Dendritic cell treated with granulocyte-macrophage colony-stimulating factor and Interleukin-4, amounts not matched to agents 40 ng/mL and 50 ng/mL, for 4 days (primary cell): ENCODE measurements at regions of chr14 and their contacts with region 1.

Region 1: DNA sequence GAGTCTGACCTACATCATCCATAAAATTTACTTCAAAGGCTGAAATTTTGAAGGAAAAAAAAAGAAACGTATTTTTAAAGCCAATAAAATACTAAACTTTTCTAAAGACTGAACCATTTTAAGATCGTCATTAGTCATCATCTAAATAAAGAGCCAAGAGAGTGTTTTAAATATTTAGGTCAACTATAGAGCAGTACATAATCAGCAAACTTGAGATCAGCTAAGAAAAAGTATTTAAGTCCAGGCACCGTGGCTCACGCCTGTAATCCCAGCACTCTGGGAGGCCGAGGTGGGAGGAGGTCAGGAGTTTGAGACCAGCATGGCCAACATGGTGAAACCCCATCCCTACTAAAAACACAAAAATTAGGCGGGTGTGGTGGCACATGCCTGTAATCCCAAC is 35.5 kb downstream of the HECTD1 start:
- H3K4me3 Mint-ChIP-seq: no peak overlapping the region
- H3K27ac Mint-ChIP-seq: no peak overlapping the region
- H3K4me1 Mint-ChIP-seq: no peaks in the 10 kb centered on the region
- H3K27me3 Mint-ChIP-seq: no peaks in the 10 kb centered on the region

Region 2: GRCh38 chr14:30943694-30944093 is 228.4 kb before region 1 on chr14:
- intact Hi-C with region 1: loop called (anchors 10 kb)
- H3K4me3 Mint-ChIP-seq: no peak overlapping the region
- H3K27ac Mint-ChIP-seq: no peak overlapping the region
- H3K4me1 Mint-ChIP-seq: no peaks in the 10 kb centered on the region
- H3K27me3 Mint-ChIP-seq: no peaks in the 10 kb centered on the region

Region 3: DNA sequence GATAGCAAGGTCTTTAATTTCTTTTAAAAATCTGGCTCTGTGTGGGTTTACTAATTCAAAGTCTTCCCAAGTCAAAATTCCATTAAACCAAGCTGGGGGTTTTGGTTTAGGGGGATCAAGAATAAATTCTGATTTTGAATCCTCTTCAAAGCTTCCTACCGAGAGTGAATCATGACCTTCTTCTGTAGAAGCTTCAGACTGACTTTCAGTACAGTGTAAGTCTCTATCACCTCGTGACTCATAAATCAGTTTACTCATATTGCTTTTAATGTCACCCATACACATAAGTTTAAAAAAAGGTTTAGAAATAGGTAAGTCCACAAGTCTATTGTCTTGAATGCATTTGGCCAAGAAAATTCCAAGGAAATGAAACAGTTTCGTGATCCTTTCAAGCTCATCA is 65.3 kb before region 1 on chr14:
- intact Hi-C with region 1: loop called (anchors 5 kb)
- H3K4me3 Mint-ChIP-seq: no peak overlapping the region
- H3K27ac Mint-ChIP-seq: no peak overlapping the region
- H3K4me1 Mint-ChIP-seq: no peaks in the 10 kb centered on the region
- H3K27me3 Mint-ChIP-seq: no peaks in the 10 kb centered on the region